A673 (cell line): ENCODE measurements at regions of chrX and their contacts with region 1.

Region 1: GRCh38 chrX:22203186-22203585 is 69.5 kb upstream of the CBLL2 start:
- DNase-seq: no peak
- H3K4me3 ChIP-seq: no peak overlapping the region
- H3K27ac ChIP-seq: no peak overlapping the region
- H3K4me1 ChIP-seq: no peaks in the 10 kb centered on the region
- H3K27me3 ChIP-seq: no peaks in the 10 kb centered on the region
- CTCF ChIP-seq: no peak

Region 2: DNA sequence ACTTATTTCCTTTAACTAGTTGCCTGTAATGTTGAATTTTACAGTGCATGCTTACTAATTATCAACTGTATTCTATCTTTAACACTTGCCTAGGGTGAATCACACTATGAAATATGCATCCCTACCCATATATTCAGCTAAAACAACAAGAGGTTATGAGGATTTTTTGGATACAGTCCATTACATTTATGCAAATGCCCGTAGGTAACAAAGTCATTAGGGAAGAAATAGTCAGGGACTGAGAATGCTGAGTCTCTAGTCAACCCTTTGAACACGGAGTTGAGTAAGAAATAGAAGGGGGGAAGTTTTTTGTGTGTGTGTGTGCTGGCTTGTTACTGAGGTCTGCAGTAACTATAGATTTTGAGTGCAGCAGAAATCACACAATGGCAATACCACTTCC is 43.4 kb after region 1 on chrX:
- CTCF ChIA-PET with region 1: no interaction called
- POLR2A ChIA-PET with region 1: no interaction called
- intact Hi-C with region 1: loop called (anchors 2 kb)
- DNase-seq: no peak
- H3K4me3 ChIP-seq: no peak overlapping the region
- H3K27ac ChIP-seq: no peak overlapping the region
- H3K4me1 ChIP-seq: no peaks in the 10 kb centered on the region
- H3K27me3 ChIP-seq: no peaks in the 10 kb centered on the region
- CTCF ChIP-seq: no peak